ENCODE measurements at regions of chr5 and their contacts with region 1.

Region 1: DNA sequence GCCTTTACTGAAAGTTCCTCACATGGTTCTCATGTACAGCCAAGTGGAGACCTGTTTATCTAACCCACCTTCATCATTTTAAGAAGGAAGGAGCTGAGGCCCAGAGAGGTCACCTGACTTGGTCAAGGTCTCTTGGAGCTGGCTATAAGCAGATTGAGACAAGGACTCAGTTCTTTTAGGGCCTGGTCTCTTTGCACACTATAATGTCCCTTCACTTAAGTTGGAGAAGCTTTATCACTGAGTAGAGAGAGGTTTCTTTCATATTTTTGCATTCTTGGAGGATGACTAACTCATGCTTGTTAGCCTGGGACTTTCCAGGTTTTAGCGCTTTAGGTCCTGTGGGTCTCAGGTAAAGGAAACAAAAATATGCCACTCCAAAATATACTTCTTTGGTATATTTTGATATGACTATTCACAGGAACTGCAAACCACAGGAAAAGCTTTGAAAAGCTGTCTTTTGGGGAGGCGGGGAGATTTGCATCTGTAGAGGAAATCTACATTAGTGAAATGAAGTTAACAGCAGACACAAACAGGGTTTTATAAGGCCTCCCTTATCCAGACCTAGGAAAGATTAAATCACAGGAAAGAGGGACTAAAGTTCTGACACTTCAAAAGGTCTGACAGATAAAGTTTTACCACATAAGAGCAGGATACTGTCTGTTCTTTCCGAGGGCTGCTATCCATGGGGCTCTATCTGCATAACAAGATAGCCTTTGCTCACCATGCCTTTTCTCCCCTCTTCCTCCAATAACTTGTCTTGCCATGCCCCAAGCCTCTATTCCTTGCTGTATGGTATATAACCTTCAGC is 95.8 kb upstream of the ANKRD55 start:
- DNase-seq: no peak
- ATAC-seq: peak; percentile 46
- H3K4me3 Mint-ChIP-seq: peak overlapping the region; percentile 69
- H3K27ac Mint-ChIP-seq: peak overlapping the region; percentile 82
- H3K4me1 Mint-ChIP-seq: peaks cover 48% of the 10 kb centered on the region
- H3K27me3 Mint-ChIP-seq: no peaks in the 10 kb centered on the region

Region 2: DNA sequence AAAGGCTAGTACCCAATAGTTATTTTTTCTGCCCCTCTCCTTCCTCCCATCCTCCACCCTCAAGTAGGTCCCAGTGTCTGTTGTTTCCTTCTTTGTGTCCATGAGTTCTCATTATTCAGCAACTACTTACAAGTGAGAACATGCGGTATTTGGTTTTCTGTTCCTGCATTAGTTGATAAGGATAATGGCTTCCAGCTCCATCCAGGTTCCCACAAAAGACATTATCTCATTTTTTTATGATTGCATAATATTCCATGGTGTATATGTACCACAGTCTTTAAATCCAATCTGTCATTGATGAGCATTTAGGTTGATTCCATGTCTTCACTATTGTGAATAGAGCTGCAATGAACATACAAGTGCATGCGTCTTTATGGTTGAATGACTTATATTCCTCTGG is 32.4 kb after region 1 on chr5:
- POLR2A ChIA-PET with region 1: interaction called, 10 read pairs
- DNase-seq: no peak
- ATAC-seq: no peak
- H3K4me3 Mint-ChIP-seq: no peak overlapping the region
- H3K27ac Mint-ChIP-seq: no peak overlapping the region
- H3K4me1 Mint-ChIP-seq: peaks cover 5% of the 10 kb centered on the region
- H3K27me3 Mint-ChIP-seq: peaks cover 4% of the 10 kb centered on the region